Natural killer cell (primary cell): ENCODE measurements at regions of chr11 and their contacts with region 1.

Region 1: GRCh38 chr11:36289226-36289852 is at the start of gene COMMD9:
- DNase-seq: peak; percentile 86 to 95
- ATAC-seq: peak; percentile 96 to 99 (median 98)
- H3K4me3 ChIP-seq: peak within 1 kb of the TSS; percentile 88
- H3K4me3 Mint-ChIP-seq: peak within 1 kb of the TSS; percentile 97
- H3K27ac ChIP-seq: no peak within 1 kb of the TSS
- H3K27ac Mint-ChIP-seq: peak within 1 kb of the TSS; percentile 86 to 94
- H3K4me1 ChIP-seq: peaks cover 15% of the 10 kb centered on the region
- H3K4me1 Mint-ChIP-seq: peaks cover 34 to 37% of the 10 kb centered on the region in 2 donors
- H3K27me3 ChIP-seq: no peaks in the 10 kb centered on the region
- H3K27me3 Mint-ChIP-seq: no peaks in the 10 kb centered on the region
- CTCF ChIP-seq: no peak
- total RNA-seq, gene COMMD9: 64.6 to 79.1 (median 74.0) TPM

Region 2: GRCh38 chr11:35662649-35663407 is 626.5 kb before region 1 on chr11 and contains the start of gene TRIM44:
- intact Hi-C with region 1: loop called (anchors 5 kb)
- DNase-seq: peak; percentile 77 to 86
- ATAC-seq: peak; percentile 83 to 91 (median 85)
- H3K4me3 ChIP-seq: peak within 1 kb of the TSS; percentile 84
- H3K4me3 Mint-ChIP-seq: peak within 1 kb of the TSS; percentile 90
- H3K27ac ChIP-seq: peak within 1 kb of the TSS; percentile 87
- H3K27ac Mint-ChIP-seq: peak within 1 kb of the TSS; percentile 93 to 98
- H3K4me1 ChIP-seq: peaks cover 20% of the 10 kb centered on the region
- H3K4me1 Mint-ChIP-seq: peaks cover 52 to 53% of the 10 kb centered on the region in 2 donors
- H3K27me3 ChIP-seq: peaks cover 5% of the 10 kb centered on the region
- H3K27me3 Mint-ChIP-seq: peaks cover 14 to 16% of the 10 kb centered on the region in 2 donors
- CTCF ChIP-seq: no peak
- total RNA-seq, gene TRIM44: 47.0 to 62.6 (median 51.9) TPM

Region 3: GRCh38 chr11:36492724-36493304 is 203.5 kb after region 1 on chr11:
- intact Hi-C with region 1: loop called (anchors 1 kb)
- DNase-seq: peak in 1 of 2 donors; percentile 81
- ATAC-seq: peak; percentile 72 to 79 (median 75)
- H3K4me3 ChIP-seq: no peak overlapping the region
- H3K4me3 Mint-ChIP-seq: no peak overlapping the region
- H3K27ac ChIP-seq: no peak overlapping the region
- H3K27ac Mint-ChIP-seq: peak overlapping the region; percentile 62 to 68
- H3K4me1 ChIP-seq: peaks cover 5% of the 10 kb centered on the region
- H3K4me1 Mint-ChIP-seq: peaks cover 25 to 29% of the 10 kb centered on the region in 2 donors
- H3K27me3 ChIP-seq: no peaks in the 10 kb centered on the region
- H3K27me3 Mint-ChIP-seq: no peaks in the 10 kb centered on the region
- CTCF ChIP-seq: peak; percentile 86

Region 4: DNA sequence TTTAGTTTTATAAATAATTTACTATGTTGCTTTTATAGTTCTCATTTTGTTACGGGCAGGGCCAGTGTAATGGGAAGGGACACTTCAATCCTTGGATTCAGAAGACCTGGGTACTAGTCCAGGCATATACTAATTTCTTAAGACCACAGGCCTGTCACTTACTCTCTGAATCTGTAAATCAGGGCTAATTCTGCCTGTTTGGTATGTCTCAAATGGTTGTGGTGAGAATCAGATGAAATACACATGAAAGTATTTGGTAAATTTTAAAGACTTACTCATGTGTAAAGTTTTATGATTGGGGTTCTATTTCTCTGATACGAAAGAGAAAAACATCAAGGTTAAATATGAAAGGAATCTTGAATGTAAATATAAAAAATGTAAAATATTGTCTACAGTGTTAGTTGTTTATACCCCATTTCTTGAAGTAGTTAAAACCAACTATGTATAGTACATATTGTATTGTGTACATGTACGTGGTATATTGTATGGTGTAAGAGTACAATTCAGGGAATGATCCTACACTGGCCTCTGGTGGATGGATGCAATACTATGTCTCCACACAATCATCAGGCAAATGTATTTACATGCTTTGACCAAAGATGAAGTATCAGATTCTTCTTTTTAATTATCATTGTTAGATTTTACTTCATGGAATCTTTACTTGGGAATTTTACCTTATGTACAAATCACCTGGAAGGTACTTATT is 333.2 kb after region 1 on chr11:
- intact Hi-C with region 1: loop called (anchors 2 kb)
- DNase-seq: peak in 1 of 2 donors; percentile 39
- ATAC-seq: peak; percentile 53 to 72 (median 64)
- H3K4me3 ChIP-seq: no peak overlapping the region
- H3K4me3 Mint-ChIP-seq: no peak overlapping the region
- H3K27ac ChIP-seq: no peak overlapping the region
- H3K27ac Mint-ChIP-seq: no peak overlapping the region
- H3K4me1 ChIP-seq: no peaks in the 10 kb centered on the region
- H3K4me1 Mint-ChIP-seq: peaks cover 0 to 9% of the 10 kb centered on the region in 2 donors
- H3K27me3 ChIP-seq: no peaks in the 10 kb centered on the region
- H3K27me3 Mint-ChIP-seq: peaks cover 6 to 9% of the 10 kb centered on the region in 2 donors
- CTCF ChIP-seq: peak; percentile 25

Region 5: DNA sequence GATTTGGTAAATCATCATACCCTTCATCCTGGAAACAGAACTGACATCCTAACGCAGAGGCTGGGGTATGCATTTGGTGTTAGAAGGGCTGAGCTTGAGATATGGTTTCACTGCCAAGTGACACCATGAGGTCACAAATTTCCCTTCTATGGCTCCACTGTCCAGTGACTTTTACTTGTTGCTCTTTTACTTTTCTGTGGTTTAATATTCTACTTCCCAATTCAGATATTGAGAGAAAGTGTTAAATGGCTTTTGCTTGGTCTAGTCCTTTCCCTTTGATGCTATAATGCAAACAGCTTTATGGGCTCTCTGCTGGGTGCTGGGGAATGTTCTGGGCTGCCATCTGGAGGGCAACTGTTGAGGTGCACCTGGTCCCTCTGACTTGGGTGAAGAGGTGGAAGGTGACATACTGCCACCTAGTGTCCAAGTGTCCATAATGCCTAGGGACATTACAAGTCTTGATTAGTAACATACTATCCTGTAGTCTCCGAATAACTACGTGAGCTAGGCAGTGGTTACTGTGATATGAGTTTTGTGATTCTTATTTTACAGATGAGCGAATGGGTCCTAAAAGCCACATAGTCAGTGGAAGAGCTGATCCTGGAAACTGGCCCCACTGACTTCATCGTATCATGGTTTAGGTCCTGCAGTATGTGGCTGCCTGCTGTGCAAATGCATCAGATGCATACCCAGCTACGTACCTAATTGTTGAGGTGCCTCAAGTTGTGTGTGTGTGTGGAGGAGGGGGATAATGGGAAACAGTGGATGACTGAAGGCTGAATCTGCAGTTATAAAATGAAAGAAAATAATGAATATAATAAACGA is 457.8 kb after region 1 on chr11:
- intact Hi-C with region 1: loop called (anchors 1 kb)
- DNase-seq: peak; percentile 76 to 93
- ATAC-seq: peak; percentile 100
- H3K4me3 ChIP-seq: no peak overlapping the region
- H3K4me3 Mint-ChIP-seq: no peak overlapping the region
- H3K27ac ChIP-seq: no peak overlapping the region
- H3K27ac Mint-ChIP-seq: no peak overlapping the region
- H3K4me1 ChIP-seq: no peaks in the 10 kb centered on the region
- H3K4me1 Mint-ChIP-seq: peaks cover 14 to 18% of the 10 kb centered on the region in 2 donors
- H3K27me3 ChIP-seq: no peaks in the 10 kb centered on the region
- H3K27me3 Mint-ChIP-seq: peaks cover 32 to 41% of the 10 kb centered on the region in 2 donors
- CTCF ChIP-seq: peak; percentile 97